Transverse colon (tissue), 4 donors: ENCODE measurements at regions of chr14 and their contacts with region 1.

Region 1: DNA sequence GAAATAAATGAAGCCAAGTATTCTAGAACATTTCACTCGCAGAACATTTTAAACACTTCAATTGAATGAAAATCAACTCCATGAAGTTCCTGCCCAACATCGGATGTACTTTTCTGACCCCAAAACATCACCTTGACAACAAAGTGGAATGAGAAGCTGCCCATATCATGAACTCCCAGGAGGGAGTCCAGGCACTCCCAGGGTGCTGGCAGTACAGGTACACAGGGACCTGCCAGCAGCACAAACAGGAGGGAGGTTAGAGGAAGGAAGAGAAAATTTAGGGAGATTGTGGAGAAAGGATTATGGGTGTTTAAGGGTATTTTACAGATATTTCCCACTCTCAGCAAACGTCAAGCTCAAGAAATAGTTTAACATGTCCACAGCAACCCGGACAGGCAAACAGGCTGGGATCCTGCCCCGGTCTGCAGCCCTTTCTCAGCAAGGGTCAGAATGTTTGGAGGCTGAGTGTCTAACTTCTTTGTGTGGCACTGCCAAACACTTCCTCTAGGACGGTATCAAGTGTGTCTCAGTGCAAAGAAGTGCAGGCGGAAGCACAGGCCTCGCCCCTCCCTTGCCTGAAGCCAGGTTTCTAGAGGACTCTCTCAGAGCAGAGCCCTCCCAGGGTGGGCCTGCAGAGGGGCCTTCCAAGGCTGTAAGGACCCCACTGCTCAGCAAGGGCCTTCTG is 72.2 kb downstream of the SETD3 start:
- DNase-seq: no peak
- H3K4me3 ChIP-seq: no peak overlapping the region
- H3K27ac ChIP-seq: no peak overlapping the region
- H3K4me1 ChIP-seq: no peaks in the 10 kb centered on the region
- H3K27me3 ChIP-seq: no peaks in the 10 kb centered on the region
- CTCF ChIP-seq: no peak
- EP300 ChIP-seq: no peak
- POLR2A ChIP-seq: no peak

Region 2: DNA sequence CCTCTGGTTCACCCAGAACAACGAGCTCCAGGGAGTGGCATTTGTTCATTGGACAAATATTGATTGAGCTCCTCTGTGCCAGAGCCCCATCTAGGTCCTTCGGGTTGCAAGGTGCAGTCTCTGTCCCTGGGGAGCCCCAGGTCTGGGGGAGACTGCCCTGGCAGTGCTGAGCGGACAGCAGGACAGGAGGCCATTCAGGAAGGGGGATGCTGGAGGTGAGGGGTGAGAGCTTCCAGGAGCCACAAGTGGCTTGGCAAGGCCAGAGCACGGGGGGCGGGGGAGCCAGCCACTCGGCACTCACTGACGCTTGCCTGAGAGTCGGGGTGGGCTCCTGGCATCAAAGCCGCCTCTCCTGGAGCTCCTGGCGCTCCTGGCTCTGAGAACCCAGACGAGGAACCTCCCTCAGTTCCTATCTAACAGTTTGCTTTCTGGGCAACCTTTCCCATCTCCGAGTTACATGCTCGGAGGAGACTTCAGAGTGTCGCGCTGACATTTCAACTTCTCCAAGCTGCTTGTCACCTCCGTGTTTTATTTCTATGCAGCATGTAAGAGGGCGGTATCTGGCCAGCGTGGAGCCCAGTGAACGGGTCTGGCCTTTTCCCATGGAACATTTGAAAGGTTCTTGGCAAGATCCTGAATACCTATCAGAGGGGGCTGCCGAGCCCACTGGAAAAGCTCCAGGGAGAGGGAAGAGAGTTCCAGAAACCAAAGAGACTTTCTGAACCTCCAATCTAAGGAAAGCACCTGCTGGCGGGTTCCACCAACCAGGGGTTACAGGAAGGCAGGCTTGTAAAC is 74.4 kb before region 1 on chr14:
- in situ Hi-C with region 1: no loop called
- intact Hi-C with region 1: loop called (anchors 2 kb)
- DNase-seq: no peak
- H3K4me3 ChIP-seq: no peak overlapping the region
- H3K27ac ChIP-seq: no peak overlapping the region
- H3K4me1 ChIP-seq: no peaks in the 10 kb centered on the region
- H3K27me3 ChIP-seq: peaks cover 8% of the 10 kb centered on the region
- CTCF ChIP-seq: no peak
- EP300 ChIP-seq: no peak
- POLR2A ChIP-seq: no peak

Region 3: DNA sequence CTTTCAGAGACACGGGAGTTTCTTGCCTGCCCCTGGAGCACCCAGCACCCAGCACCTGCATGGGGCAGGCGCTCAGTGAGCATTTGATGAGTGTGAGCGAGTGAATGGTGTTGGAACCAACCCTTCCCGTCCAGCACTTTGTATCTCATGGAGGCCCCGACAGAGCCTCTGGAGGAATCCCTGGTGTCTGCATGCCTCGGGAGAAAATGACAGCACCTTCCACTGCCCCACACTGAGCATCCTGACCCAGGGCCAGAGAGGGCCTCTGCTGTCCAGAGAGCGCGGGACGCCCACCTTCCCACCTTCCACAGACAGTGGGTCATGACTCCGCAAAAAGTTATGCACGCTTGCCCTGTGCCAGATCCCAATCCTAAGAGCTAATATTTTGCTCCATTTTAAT is 33.5 kb before region 1 on chr14:
- in situ Hi-C with region 1: no loop called
- intact Hi-C with region 1: no loop called
- DNase-seq: no peak
- H3K4me3 ChIP-seq: no peak overlapping the region
- H3K27ac ChIP-seq: no peak overlapping the region
- H3K4me1 ChIP-seq: no peaks in the 10 kb centered on the region
- H3K27me3 ChIP-seq: no peaks in the 10 kb centered on the region
- CTCF ChIP-seq: no peak
- EP300 ChIP-seq: no peak
- POLR2A ChIP-seq: no peak

Region 4: GRCh38 chr14:99441157-99441870 is 32.9 kb after region 1 on chr14:
- in situ Hi-C with region 1: no loop called
- intact Hi-C with region 1: no loop called
- DNase-seq: no peak
- H3K4me3 ChIP-seq: no peak overlapping the region
- H3K27ac ChIP-seq: no peak overlapping the region
- H3K4me1 ChIP-seq: no peaks in the 10 kb centered on the region
- H3K27me3 ChIP-seq: no peaks in the 10 kb centered on the region
- CTCF ChIP-seq: no peak
- EP300 ChIP-seq: no peak
- POLR2A ChIP-seq: no peak